ENCODE measurements at regions of chr1 and their contacts with region 1.

Region 1: DNA sequence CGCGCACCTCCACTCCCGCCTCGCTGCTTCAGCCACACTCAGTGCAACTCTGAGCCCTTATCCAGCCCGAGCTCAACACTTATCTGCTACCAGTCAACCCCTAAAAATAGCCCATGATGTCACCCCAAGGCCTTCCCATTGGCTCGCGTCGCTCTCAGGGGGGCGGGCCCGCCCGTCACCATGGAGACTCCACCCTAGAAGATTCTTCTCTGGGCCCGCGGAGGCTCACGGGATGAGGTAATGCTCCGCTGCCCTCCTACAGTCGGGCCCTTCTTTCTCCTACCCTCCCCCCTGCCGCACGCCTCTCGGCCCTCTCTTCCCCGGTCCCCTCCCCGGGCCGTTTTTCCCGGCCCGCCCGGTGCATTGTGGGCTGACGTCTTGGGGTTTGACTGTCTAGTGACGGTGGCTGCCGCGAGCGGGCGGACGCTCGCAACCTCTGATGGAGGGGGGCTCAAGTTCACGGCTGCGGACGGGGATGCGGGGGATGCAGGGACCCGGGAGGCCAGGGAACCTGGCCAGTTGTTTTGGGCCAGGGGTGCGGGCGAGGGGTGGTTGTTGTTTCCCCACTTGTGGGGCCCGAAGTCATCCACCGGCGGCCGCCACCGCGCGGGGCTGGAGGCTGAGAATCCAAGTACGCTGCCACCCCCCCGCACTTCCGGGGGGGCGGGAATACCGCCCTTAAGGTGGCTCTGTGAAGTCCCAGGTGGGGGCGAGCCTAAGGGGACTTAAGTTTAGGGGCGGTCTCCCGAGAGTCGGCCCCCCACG is at the start of gene JUN:
- DNase-seq: peak; percentile 97 to 100 (median 100)
- ATAC-seq: peak; percentile 64 to 78 (median 70)
- H3K4me3 ChIP-seq: peak within 1 kb of the TSS; percentile 78 to 96 (median 92)
- H3K27ac ChIP-seq: peak within 1 kb of the TSS; percentile 97 to 100 (median 100)
- H3K4me1 ChIP-seq: peaks cover 6 to 15% (median 14%) of the 10 kb centered on the region in 3 donors
- H3K27me3 ChIP-seq: no peaks in the 10 kb centered on the region
- CTCF ChIP-seq: no peak
- total RNA-seq, gene JUN: 47.1 to 111 (median 86.2) TPM

Region 2: DNA sequence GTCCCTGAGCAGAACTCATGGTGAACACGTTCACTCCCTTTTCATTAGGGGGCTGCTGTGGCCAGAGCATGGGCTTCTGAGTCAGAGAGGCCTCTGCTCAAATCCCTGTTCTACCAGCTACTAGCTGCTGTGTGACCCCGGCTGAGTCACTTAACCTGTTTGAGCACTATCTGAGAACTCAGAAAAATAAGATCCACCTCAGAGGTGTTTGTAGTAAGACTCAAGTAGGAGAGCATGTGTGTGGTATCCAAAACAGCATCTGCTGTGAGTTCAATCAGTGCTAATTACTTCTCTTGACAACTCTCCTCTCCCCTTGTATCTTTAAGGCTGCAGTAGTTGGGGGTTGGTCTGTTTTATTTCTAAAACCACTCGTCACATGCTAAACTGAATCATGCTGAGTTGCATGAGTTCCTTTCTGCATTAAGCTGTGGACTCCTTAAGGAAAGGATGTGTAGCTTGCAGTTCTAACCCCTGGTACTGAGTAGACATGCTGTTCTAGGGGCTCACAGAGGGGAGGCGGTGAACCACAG is 39.4 kb after region 1 on chr1:
- intact Hi-C with region 1: no loop called
- DNase-seq: no peak
- ATAC-seq: peak in 2 of 4 donors; percentile 36 to 41
- H3K4me3 ChIP-seq: no peak overlapping the region
- H3K27ac ChIP-seq: no peak overlapping the region
- H3K4me1 ChIP-seq: peaks cover 0 to 7% (median 3%) of the 10 kb centered on the region in 3 donors
- H3K27me3 ChIP-seq: no peaks in the 10 kb centered on the region
- CTCF ChIP-seq: no peak

Region 3: GRCh38 chr1:58883037-58883887 is 99.1 kb after region 1 on chr1:
- intact Hi-C with region 1: loop called in 1 of 3 experiments (anchors 10 kb)
- DNase-seq: peak in 4 of 6 donors; percentile 55 to 67 (median 60)
- ATAC-seq: peak; percentile 16 to 62 (median 31)
- H3K4me3 ChIP-seq: no peak overlapping the region
- H3K27ac ChIP-seq: peak overlapping the region; percentile 34 to 83 (median 58)
- H3K4me1 ChIP-seq: peaks cover 39 to 51% (median 39%) of the 10 kb centered on the region in 3 donors
- H3K27me3 ChIP-seq: no peaks in the 10 kb centered on the region
- CTCF ChIP-seq: no peak

Region 4: DNA sequence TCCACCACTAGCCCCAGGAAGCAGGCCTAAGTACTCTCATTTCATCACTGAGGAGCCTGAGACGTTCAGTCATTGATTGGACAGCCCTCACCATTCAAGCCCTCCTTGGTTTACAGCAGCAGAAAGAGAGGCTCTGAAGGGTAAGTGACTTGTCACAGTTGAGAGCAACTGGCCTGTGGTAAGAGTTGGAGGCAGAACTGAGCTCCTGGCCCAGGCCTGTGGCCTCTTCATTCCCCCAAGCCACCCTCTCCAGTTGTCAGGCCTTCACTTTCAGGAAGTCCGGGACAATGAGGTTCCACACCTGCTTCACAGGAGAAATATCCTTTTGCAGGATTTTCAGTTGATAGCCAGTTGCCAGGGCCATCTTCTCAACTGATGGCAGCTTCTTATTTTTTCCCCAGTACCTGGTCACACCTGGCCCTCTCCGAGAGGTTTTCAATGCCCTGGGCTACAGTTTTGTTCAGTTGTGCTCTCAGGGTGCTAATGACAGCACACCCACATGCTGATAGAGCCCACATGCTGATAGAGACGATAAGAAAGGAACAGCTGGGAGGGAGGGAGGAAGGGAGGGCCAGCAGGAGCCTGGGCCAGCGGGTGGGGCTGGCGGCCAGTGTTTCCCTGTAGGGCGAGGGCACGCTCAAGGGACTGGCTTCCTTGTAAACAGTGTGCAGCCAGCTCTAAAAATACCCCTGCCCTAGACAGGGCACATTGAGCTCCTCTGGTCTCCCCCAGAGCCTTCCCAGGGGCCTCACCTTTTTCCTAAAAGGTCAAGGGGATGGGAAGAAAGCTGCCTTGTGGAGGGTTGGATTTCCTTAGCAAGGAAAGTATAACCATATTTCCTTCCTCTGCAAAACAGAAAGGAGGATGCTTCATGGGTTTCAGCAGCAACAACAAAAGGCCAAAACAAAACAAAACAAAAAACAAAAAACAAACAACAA is 112.3 kb after region 1 on chr1:
- intact Hi-C with region 1: loop called in 1 of 3 experiments (anchors 10 kb)
- DNase-seq: peak in 5 of 6 donors; percentile 55 to 82 (median 76)
- ATAC-seq: peak; percentile 55 to 79 (median 77)
- H3K4me3 ChIP-seq: no peak overlapping the region
- H3K27ac ChIP-seq: peak overlapping the region in 2 of 4 donors; percentile 64
- H3K4me1 ChIP-seq: peaks cover 12 to 76% (median 58%) of the 10 kb centered on the region in 3 donors
- H3K27me3 ChIP-seq: no peaks in the 10 kb centered on the region
- CTCF ChIP-seq: no peak

Region 5: GRCh38 chr1:59057211-59057694 is 273.1 kb after region 1 on chr1:
- intact Hi-C with region 1: loop called in 1 of 3 experiments (anchors 10 kb)
- DNase-seq: peak; percentile 62 to 78 (median 71)
- ATAC-seq: peak; percentile 77 to 89 (median 86)
- H3K4me3 ChIP-seq: peak overlapping the region in 3 of 4 donors; percentile 9 to 19 (median 11)
- H3K27ac ChIP-seq: peak overlapping the region; percentile 37 to 78 (median 67)
- H3K4me1 ChIP-seq: peaks cover 28 to 50% (median 50%) of the 10 kb centered on the region in 3 donors
- H3K27me3 ChIP-seq: no peaks in the 10 kb centered on the region
- CTCF ChIP-seq: no peak

Measured in pancreas (tissue), 10 donors.